ENCODE measurements at regions of chr17 and their contacts with region 1.

Region 1: GRCh38 chr17:17681187-17681848 is at the start of gene RAI1:
- DNase-seq: peak; percentile 74 to 87
- ATAC-seq: peak; percentile 48 to 53
- H3K4me3 ChIP-seq: peak within 1 kb of the TSS; percentile 77
- H3K27ac ChIP-seq: peak within 1 kb of the TSS; percentile 94 to 97
- H3K4me1 ChIP-seq: peaks cover 35% of the 10 kb centered on the region
- CTCF ChIP-seq: peak; percentile 99
- EP300 ChIP-seq: no peak
- POLR2A ChIP-seq: peak; percentile 20; the same call in 1 of the 2 replicates
- RAD21 ChIP-seq: peak; percentile 59 to 98
- polyA plus RNA-seq, gene RAI1: 3.5 and 7.1 TPM in 2 replicates

Region 2: GRCh38 chr17:17580662-17581470 is 100.5 kb before region 1 on chr17:
- CTCF ChIA-PET with region 1: no interaction called
- POLR2A ChIA-PET with region 1: no interaction called
- DNase-seq: no peak
- ATAC-seq: peak; percentile 31 to 68; a peak in 5 of 6 replicates
- H3K4me3 ChIP-seq: no peak overlapping the region
- H3K27ac ChIP-seq: peak overlapping the region in 1 of 2 experiments; percentile 40; a peak in 3 of 6 replicates
- H3K4me1 ChIP-seq: peaks cover 10% of the 10 kb centered on the region
- CTCF ChIP-seq: no peak
- EP300 ChIP-seq: no peak
- POLR2A ChIP-seq: no peak
- RAD21 ChIP-seq: no peak

Region 3: GRCh38 chr17:17694169-17695081 is 13.1 kb after region 1 on chr17:
- CTCF ChIA-PET with region 1: interaction called, 112 read pairs
- POLR2A ChIA-PET with region 1: interaction called, 5 read pairs
- DNase-seq: peak; percentile 81 to 82
- ATAC-seq: peak; percentile 64 to 66
- H3K4me3 ChIP-seq: peak overlapping the region; percentile 76
- H3K27ac ChIP-seq: peak overlapping the region; percentile 96 to 97
- H3K4me1 ChIP-seq: peaks cover 90% of the 10 kb centered on the region
- CTCF ChIP-seq: no peak
- EP300 ChIP-seq: no peak; a peak in 1 of 5 replicates
- POLR2A ChIP-seq: peak; percentile 56
- RAD21 ChIP-seq: no peak

Region 4: DNA sequence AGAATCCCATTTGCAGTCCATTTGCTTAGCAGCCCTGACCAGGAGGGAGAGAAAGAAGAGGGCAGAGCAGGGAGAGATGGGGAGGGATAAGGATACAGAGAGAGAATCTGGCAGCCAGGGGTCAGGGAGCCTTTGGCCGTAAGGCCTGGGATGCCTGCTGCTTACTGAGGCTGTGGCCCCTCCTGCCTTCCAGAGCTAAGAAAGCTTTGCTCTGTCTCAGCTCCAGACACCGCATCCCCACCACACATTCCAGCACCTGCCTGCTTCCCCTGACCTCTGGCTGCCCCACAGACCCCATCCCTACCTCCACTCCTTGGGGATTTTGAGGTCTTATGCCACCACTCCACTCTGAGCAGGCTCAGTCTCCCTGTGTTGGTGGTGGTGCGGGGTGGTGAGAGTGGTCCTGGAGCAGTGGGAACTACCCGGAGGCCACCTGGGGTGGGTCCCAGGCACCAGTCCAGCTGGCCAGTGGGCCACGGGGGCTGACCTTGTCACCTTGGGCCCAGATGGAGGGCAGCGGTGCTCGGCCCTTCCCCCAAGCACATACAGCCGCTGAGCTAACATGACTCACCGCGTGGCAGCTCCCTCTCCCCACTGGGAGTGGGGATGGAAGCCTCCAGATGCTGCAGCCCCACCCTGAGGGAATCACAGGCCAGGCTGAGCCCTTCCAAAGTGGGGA is 58.2 kb after region 1 on chr17:
- CTCF ChIA-PET with region 1: interaction called, 12 read pairs
- POLR2A ChIA-PET with region 1: no interaction called
- DNase-seq: peak; percentile 52 to 88
- ATAC-seq: peak; percentile 54 to 66
- H3K4me3 ChIP-seq: 0 out of 3 replicates have a peak overlapping the region, but pooled peaks have one; percentile 4
- H3K27ac ChIP-seq: peak overlapping the region; percentile 87 to 97
- H3K4me1 ChIP-seq: peaks cover 74% of the 10 kb centered on the region
- CTCF ChIP-seq: no peak
- EP300 ChIP-seq: no peak
- POLR2A ChIP-seq: no peak
- RAD21 ChIP-seq: peak; percentile 18 to 27; a peak in 2 of 5 replicates

Region 5: GRCh38 chr17:17763136-17763535 is 81.8 kb after region 1 on chr17:
- CTCF ChIA-PET with region 1: interaction called, 55 read pairs
- POLR2A ChIA-PET with region 1: no interaction called
- DNase-seq: no peak
- ATAC-seq: no peak
- H3K4me3 ChIP-seq: no peak overlapping the region
- H3K27ac ChIP-seq: no peak overlapping the region
- H3K4me1 ChIP-seq: peaks cover 14% of the 10 kb centered on the region; the same call in 2 of the 3 replicates
- CTCF ChIP-seq: no peak
- EP300 ChIP-seq: no peak
- POLR2A ChIP-seq: no peak
- RAD21 ChIP-seq: no peak

Region 6: GRCh38 chr17:17783116-17783824 is 102.0 kb after region 1 on chr17:
- CTCF ChIA-PET with region 1: interaction called, 22 read pairs
- POLR2A ChIA-PET with region 1: interaction called, 3 read pairs
- DNase-seq: no peak
- ATAC-seq: no peak
- H3K4me3 ChIP-seq: no peak overlapping the region
- H3K27ac ChIP-seq: peak overlapping the region in 1 of 2 experiments; percentile 85; a peak in 2 of 6 replicates
- H3K4me1 ChIP-seq: peaks cover 65% of the 10 kb centered on the region
- CTCF ChIP-seq: no peak
- EP300 ChIP-seq: no peak
- POLR2A ChIP-seq: no peak
- RAD21 ChIP-seq: no peak

Region 7: GRCh38 chr17:17849845-17850373 is 168.6 kb after region 1 on chr17:
- CTCF ChIA-PET with region 1: interaction called, 18 read pairs
- POLR2A ChIA-PET with region 1: no interaction called
- DNase-seq: peak in 1 of 2 experiments; percentile 44
- ATAC-seq: peak; percentile 55 to 67; a peak in 4 of 6 replicates
- H3K4me3 ChIP-seq: no peak overlapping the region
- H3K27ac ChIP-seq: peak overlapping the region; percentile 32 to 74; a peak in 4 of 6 replicates
- H3K4me1 ChIP-seq: peaks cover 19% of the 10 kb centered on the region
- CTCF ChIP-seq: no peak
- EP300 ChIP-seq: no peak
- POLR2A ChIP-seq: no peak
- RAD21 ChIP-seq: no peak

Region 8: GRCh38 chr17:17868641-17869522 is 187.6 kb after region 1 on chr17:
- CTCF ChIA-PET with region 1: interaction called, 11 read pairs
- POLR2A ChIA-PET with region 1: no interaction called
- DNase-seq: no peak
- ATAC-seq: no peak
- H3K4me3 ChIP-seq: no peak overlapping the region
- H3K27ac ChIP-seq: no peak overlapping the region
- H3K4me1 ChIP-seq: peaks cover 5% of the 10 kb centered on the region; the same call in 1 of the 3 replicates
- CTCF ChIP-seq: no peak
- EP300 ChIP-seq: no peak
- POLR2A ChIP-seq: no peak
- RAD21 ChIP-seq: no peak